Transverse colon (tissue), 4 donors: ENCODE measurements at regions of chr10 and their contacts with region 1.

Region 1: GRCh38 chr10:5293691-5294550 is 70.8 kb upstream of the UCN3 start:
- DNase-seq: peak; percentile 75
- H3K4me3 ChIP-seq: no peak overlapping the region
- H3K27ac ChIP-seq: peak overlapping the region in 3 of 4 donors; percentile 22 to 50 (median 33)
- H3K4me1 ChIP-seq: peaks cover 0 to 17% (median 8%) of the 10 kb centered on the region in 4 donors
- H3K27me3 ChIP-seq: no peaks in the 10 kb centered on the region
- CTCF ChIP-seq: peak in 4 of 5 experiments; percentile 12 to 49 (median 41)
- EP300 ChIP-seq: no peak
- POLR2A ChIP-seq: no peak

Region 2: DNA sequence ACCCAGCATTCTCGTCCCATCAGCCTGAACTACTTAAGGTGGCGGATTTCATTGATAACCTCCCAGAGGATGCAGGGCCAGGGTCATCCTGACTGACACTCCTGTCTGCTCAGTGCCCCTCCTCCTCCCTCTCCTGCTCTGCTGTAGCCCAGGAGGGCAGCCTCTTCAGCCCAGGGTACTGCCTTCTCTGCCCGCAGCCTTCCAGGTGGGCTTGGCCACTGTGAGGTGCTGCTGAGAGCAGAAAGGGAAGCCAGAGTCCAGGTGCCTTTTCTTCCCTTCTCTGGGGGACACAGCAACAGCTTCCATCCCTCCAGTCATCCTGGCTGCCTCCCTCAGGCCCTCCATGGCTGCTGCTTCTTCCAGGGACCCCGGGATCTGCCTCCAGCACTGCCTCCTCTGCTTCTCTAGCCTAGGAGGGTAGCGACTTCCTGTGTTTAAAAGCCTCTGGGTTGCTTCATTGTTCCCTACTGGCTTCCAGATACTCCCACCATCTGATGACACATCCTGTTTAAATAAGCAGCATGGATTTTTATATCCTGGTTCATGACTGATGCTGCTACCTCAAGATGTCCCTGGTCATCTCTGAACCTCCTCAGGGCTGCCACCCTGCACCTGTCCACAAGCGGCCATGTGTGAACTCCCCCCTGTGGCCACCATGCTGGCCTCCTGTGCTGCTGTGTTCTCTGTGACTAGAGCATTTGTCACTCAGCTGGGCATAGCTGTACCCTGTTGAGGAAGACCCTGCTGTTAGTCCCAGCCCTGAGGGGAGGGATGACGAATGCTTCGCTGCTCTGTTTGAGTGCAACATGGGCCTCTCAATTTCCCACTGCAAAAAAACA is 41.5 kb before region 1 on chr10:
- in situ Hi-C with region 1: loop called in 1 of 4 experiments (anchors 5 kb)
- intact Hi-C with region 1: no loop called
- DNase-seq: no peak
- H3K4me3 ChIP-seq: no peak overlapping the region
- H3K27ac ChIP-seq: no peak overlapping the region
- H3K4me1 ChIP-seq: peaks cover 0 to 3% (median 0%) of the 10 kb centered on the region in 4 donors
- H3K27me3 ChIP-seq: no peaks in the 10 kb centered on the region
- CTCF ChIP-seq: no peak
- EP300 ChIP-seq: no peak
- POLR2A ChIP-seq: no peak

Region 3: DNA sequence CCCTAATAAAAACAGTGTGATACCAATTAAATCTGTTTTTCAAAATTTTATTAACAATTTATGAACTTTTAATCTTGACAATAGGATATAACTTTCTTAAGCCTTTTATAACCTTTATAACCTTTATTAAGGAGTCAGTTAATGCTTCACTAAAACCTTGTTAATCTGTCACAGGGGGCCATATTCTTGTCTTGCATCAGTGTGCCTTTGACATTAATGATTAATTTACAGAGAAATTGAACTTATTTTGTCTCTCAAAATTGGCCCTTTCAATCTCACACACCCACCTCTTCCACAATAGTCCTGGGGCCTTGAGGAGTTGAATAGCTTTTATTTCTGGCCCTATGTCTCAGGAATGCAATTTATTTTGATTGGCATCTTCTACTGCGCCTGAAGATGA is 28.8 kb before region 1 on chr10:
- in situ Hi-C with region 1: no loop called
- intact Hi-C with region 1: no loop called
- DNase-seq: no peak
- H3K4me3 ChIP-seq: no peak overlapping the region
- H3K27ac ChIP-seq: no peak overlapping the region
- H3K4me1 ChIP-seq: peaks cover 0 to 12% (median 3%) of the 10 kb centered on the region in 4 donors
- H3K27me3 ChIP-seq: no peaks in the 10 kb centered on the region
- CTCF ChIP-seq: no peak
- EP300 ChIP-seq: no peak
- POLR2A ChIP-seq: no peak